ENCODE measurements at regions of chr14 and their contacts with region 1.

Region 1: DNA sequence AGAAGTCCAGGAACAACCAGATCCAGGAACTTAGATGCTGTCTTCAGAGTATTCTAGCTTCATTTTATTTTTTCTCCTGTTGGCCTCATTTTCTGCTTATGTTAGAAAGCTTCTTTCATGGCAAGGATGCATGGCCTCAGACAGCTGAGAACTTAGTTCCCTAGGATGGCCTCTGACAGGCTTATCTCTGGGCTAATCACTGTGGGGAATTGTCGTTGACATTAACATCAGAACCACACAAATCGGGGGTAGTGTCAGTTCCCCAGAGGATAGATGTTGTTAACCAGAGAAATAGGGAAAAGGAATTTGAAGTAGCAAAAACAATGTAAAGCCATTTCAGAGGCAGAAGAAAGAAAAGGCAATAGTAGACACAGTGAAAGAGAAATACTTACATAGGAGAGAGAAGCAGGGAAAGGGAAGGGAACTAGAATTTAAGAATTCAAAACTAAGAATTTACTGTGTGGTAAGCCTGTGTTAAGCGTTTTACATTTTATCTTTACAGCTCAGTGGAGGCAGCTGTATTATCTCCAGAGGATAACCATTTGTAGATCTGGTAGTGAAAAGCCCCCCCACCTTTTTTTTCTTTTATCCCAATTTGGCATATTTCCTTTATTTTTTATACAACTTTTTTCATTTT is 21.8 kb downstream of the FUT8 start:
- DNase-seq: no peak
- ATAC-seq: no peak
- H3K4me3 ChIP-seq: no peak overlapping the region
- H3K4me3 Mint-ChIP-seq: no peak overlapping the region
- H3K27ac ChIP-seq: peak overlapping the region; percentile 13 to 17
- H3K27ac Mint-ChIP-seq: peak overlapping the region; percentile 54
- H3K4me1 ChIP-seq: peaks cover 25 to 37% of the 10 kb centered on the region in 2 donors
- H3K4me1 Mint-ChIP-seq: peaks cover 57% of the 10 kb centered on the region
- H3K27me3 ChIP-seq: no peaks in the 10 kb centered on the region
- H3K27me3 Mint-ChIP-seq: no peaks in the 10 kb centered on the region
- CTCF ChIP-seq: no peak

Region 2: DNA sequence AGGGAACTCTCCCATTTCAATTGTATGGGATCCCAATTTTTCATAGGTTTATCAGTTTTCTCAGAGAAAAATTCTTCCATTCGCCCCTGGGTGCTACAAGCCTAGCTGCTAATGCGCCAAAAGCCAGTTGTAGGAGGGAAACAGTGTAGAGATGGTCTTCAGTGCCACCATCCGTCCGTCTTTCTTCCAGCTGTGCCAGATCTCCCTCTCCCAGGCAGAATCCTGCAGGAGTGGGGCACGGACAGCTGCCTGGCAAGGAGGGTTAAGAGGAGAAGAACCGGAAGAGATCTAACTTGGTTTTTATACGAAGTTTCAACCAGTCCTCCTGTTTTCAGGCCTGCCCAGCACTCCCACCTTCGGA is 60.7 kb before region 1 on chr14:
- CTCF ChIA-PET with region 1: no interaction called
- POLR2A ChIA-PET with region 1: no interaction called
- intact Hi-C with region 1: no loop called
- DNase-seq: no peak
- ATAC-seq: no peak
- H3K4me3 ChIP-seq: no peak overlapping the region
- H3K4me3 Mint-ChIP-seq: no peak overlapping the region
- H3K27ac ChIP-seq: no peak overlapping the region
- H3K27ac Mint-ChIP-seq: no peak overlapping the region
- H3K4me1 ChIP-seq: peaks cover 0 to 10% of the 10 kb centered on the region in 2 donors
- H3K4me1 Mint-ChIP-seq: peaks cover 21% of the 10 kb centered on the region
- H3K27me3 ChIP-seq: no peaks in the 10 kb centered on the region
- H3K27me3 Mint-ChIP-seq: no peaks in the 10 kb centered on the region
- CTCF ChIP-seq: no peak

Region 3: GRCh38 chr14:65446159-65446558 is 11.8 kb after region 1 on chr14:
- CTCF ChIA-PET with region 1: interaction called, 3 read pairs
- POLR2A ChIA-PET with region 1: interaction called, 11 read pairs
- intact Hi-C with region 1: no loop called
- DNase-seq: no peak
- ATAC-seq: no peak
- H3K4me3 ChIP-seq: no peak overlapping the region
- H3K4me3 Mint-ChIP-seq: no peak overlapping the region
- H3K27ac ChIP-seq: no peak overlapping the region
- H3K27ac Mint-ChIP-seq: no peak overlapping the region
- H3K4me1 ChIP-seq: no peaks in the 10 kb centered on the region
- H3K4me1 Mint-ChIP-seq: peaks cover 19% of the 10 kb centered on the region
- H3K27me3 ChIP-seq: no peaks in the 10 kb centered on the region
- H3K27me3 Mint-ChIP-seq: no peaks in the 10 kb centered on the region
- CTCF ChIP-seq: no peak

Region 4: DNA sequence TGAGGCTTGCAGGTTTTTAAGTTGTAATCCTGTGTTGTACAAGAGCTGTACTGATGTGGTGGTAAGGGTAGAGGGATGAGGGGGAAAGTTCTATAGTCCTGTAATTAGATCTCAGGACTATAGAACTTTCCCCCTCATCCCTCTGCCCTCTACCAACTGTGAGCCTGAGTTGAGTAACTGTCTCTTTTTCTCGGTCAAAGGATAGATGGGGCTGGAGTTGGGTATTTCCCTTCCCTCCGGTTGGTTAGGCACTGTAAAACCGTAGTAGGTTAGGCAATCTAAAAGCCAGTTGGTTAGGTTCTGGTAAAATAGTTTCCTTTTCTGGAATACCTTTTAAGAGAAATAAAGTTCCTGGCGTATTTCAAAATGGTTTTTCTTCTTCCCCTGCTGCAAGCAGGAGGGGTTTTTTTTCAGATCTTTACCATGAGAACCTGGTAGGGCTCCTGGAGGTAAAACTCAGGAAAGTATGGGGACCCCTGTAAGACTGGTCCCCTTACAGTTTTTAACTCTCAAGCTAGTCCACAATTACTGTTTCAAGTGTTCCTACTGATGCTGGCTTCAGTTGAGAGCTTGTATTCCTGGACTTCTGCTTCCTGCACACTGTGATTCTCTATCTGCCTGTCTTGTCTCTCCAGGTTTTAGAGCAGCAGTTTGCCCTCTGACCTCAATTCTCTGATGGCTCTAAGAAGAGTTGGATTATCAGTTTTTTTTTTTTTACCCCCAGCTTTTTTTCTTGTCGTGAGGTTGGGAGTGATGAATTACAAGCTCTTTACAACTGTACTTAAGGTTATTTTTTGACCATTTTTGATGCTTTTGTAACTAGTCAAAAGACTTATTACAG is 36.9 kb after region 1 on chr14:
- CTCF ChIA-PET with region 1: no interaction called
- POLR2A ChIA-PET with region 1: no interaction called
- intact Hi-C with region 1: no loop called
- DNase-seq: peak; percentile 33
- ATAC-seq: peak; percentile 69
- H3K4me3 ChIP-seq: no peak overlapping the region
- H3K4me3 Mint-ChIP-seq: peak overlapping the region; percentile 26
- H3K27ac ChIP-seq: peak overlapping the region; percentile 9 to 18
- H3K27ac Mint-ChIP-seq: no peak overlapping the region
- H3K4me1 ChIP-seq: peaks cover 21 to 28% of the 10 kb centered on the region in 2 donors
- H3K4me1 Mint-ChIP-seq: peaks cover 48% of the 10 kb centered on the region
- H3K27me3 ChIP-seq: no peaks in the 10 kb centered on the region
- H3K27me3 Mint-ChIP-seq: no peaks in the 10 kb centered on the region
- CTCF ChIP-seq: no peak